CD4-positive, alpha-beta T cell (primary cell): ENCODE measurements at regions of chr3 and their contacts with region 1.

Region 1: GRCh38 chr3:120039642-120040610 is 54.3 kb downstream of the GSK3B start:
- DNase-seq: peak in 2 of 14 experiments; percentile 19 to 22
- ATAC-seq: no peak
- H3K4me3 ChIP-seq: no peak overlapping the region
- H3K4me3 Mint-ChIP-seq: no peak overlapping the region
- H3K27ac ChIP-seq: no peak overlapping the region
- H3K27ac Mint-ChIP-seq: no peak overlapping the region
- H3K4me1 ChIP-seq: no peaks in the 10 kb centered on the region
- H3K4me1 Mint-ChIP-seq: peaks cover 41% of the 10 kb centered on the region
- H3K27me3 ChIP-seq: no peaks in the 10 kb centered on the region
- H3K27me3 Mint-ChIP-seq: no peaks in the 10 kb centered on the region
- CTCF ChIP-seq: no peak

Region 2: GRCh38 chr3:119745942-119746341 is 294.0 kb before region 1 on chr3:
- CTCF ChIA-PET with region 1: no interaction called
- POLR2A ChIA-PET with region 1: no interaction called
- intact Hi-C with region 1: no loop called
- DNase-seq: no peak
- ATAC-seq: no peak
- H3K4me3 ChIP-seq: no peak overlapping the region
- H3K4me3 Mint-ChIP-seq: no peak overlapping the region
- H3K27ac ChIP-seq: no peak overlapping the region
- H3K27ac Mint-ChIP-seq: no peak overlapping the region
- H3K4me1 ChIP-seq: no peaks in the 10 kb centered on the region
- H3K4me1 Mint-ChIP-seq: no peaks in the 10 kb centered on the region
- H3K27me3 ChIP-seq: peaks cover 3 to 17% of the 10 kb centered on the region in 2 experiments
- H3K27me3 Mint-ChIP-seq: peaks cover 62% of the 10 kb centered on the region
- CTCF ChIP-seq: no peak

Region 3: DNA sequence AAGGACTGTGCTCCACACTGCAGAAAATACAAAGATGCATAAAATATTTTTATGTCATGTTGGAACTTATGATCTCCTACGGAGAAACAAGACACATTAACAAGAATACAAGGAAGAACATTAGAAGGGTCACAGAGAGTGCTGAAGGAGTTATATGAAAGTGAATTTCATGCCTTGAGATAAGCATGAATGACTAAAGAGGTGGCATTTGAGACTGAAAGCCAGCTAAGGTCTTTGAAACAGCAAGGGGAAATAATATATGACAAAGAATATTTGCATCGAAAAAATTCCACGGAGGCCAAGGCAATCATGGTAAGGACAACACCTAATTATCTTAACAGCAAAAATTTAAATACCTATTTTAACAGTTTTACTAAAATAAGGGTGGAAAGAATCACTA is 41.8 kb after region 1 on chr3:
- CTCF ChIA-PET with region 1: no interaction called
- POLR2A ChIA-PET with region 1: no interaction called
- intact Hi-C with region 1: loop called in 1 of 2 experiments (anchors 2 kb)
- DNase-seq: no peak
- ATAC-seq: no peak
- H3K4me3 ChIP-seq: no peak overlapping the region
- H3K4me3 Mint-ChIP-seq: no peak overlapping the region
- H3K27ac ChIP-seq: no peak overlapping the region
- H3K27ac Mint-ChIP-seq: peak overlapping the region; percentile 21
- H3K4me1 ChIP-seq: peaks cover 25% of the 10 kb centered on the region
- H3K4me1 Mint-ChIP-seq: peaks cover 80% of the 10 kb centered on the region
- H3K27me3 ChIP-seq: no peaks in the 10 kb centered on the region
- H3K27me3 Mint-ChIP-seq: no peaks in the 10 kb centered on the region
- CTCF ChIP-seq: no peak